ENCODE measurements at regions of chr16 and their contacts with region 1.

Region 1: DNA sequence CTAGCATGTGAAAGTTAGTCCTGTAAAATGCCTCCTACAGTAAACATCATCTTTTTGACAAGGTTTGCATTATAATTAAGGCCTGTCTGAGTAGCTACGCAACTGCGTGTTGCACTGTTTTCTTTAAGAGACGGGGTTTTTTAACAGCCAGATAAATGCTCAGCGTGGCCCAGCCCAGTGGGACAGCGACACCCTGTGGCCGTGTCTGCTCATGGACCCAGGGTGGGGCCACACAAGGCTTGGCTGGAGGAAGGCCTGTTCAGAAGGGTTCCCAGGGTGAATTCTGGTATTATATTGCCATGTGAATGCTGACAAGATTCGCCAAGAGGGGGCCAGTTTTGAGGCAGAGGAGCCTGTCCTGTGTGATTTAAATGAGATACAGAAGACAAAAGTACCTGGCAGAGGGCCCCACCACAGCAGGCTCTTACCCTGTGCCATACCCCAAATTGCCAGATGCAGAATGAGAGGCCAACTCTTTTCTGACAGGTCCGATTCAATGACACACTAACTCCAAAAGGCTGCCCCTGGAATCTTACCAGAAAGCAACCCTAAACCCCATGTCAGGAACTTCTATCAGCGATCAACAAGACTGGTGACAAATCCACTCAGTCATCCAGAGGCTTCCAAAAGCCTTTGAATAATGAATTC is 65.9 kb upstream of the IRX6 start:
- DNase-seq: peak; percentile 57 to 92
- H3K4me3 ChIP-seq: no peak overlapping the region
- H3K27ac ChIP-seq: no peak overlapping the region
- H3K4me1 ChIP-seq: no peaks in the 10 kb centered on the region
- H3K27me3 ChIP-seq: no peaks in the 10 kb centered on the region; a peak in 1 of 7 replicates
- CTCF ChIP-seq: peak; percentile 92 to 98 (median 95)
- EP300 ChIP-seq: no peak
- POLR2A ChIP-seq: no peak
- RAD21 ChIP-seq: peak; percentile 99 to 100

Region 2: GRCh38 chr16:54957403-54958171 is 300.5 kb before region 1 on chr16:
- CTCF ChIA-PET with region 1: interaction called, 14 read pairs
- POLR2A ChIA-PET with region 1: no interaction called
- DNase-seq: peak in 1 of 2 experiments; percentile 69
- H3K4me3 ChIP-seq: no peak overlapping the region
- H3K27ac ChIP-seq: no peak overlapping the region
- H3K4me1 ChIP-seq: no peaks in the 10 kb centered on the region
- H3K27me3 ChIP-seq: no peaks in the 10 kb centered on the region
- CTCF ChIP-seq: peak; percentile 46 to 63 (median 61)
- EP300 ChIP-seq: no peak
- POLR2A ChIP-seq: no peak
- RAD21 ChIP-seq: peak; percentile 66 to 68

Region 3: GRCh38 chr16:55043499-55043898 is 214.6 kb before region 1 on chr16:
- CTCF ChIA-PET with region 1: interaction called, 15 read pairs
- POLR2A ChIA-PET with region 1: no interaction called
- DNase-seq: no peak
- H3K4me3 ChIP-seq: no peak overlapping the region
- H3K27ac ChIP-seq: no peak overlapping the region
- H3K4me1 ChIP-seq: no peaks in the 10 kb centered on the region
- H3K27me3 ChIP-seq: 0 out of 7 replicates have a peak, but pooled peaks cover 0 to 2% (median 0%) of the 10 kb centered on the region in 4 experiments
- CTCF ChIP-seq: peak; percentile 24 to 45 (median 39)
- EP300 ChIP-seq: no peak
- POLR2A ChIP-seq: no peak
- RAD21 ChIP-seq: peak; percentile 14 to 50; a peak in 3 of 4 replicates

Region 4: DNA sequence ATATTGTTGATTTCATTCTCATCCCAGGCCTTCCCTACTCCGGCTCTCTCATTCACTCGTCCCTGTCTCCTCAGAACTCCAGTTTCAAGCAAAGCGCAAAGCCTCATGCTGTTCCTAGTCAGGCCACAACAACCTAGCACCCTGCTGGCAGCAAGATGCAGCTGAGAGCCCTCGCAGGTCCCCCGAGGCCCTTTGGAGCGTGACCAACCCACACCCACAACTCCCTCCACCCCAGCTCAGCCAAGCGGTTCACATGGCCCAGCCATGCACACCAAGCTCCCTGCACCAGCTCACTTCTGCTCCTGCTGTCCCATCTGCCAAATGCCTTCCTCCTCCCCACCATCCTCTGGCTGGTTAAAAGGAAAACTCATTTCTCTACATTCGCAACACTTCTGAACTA is 131.6 kb before region 1 on chr16:
- CTCF ChIA-PET with region 1: interaction called, 30 read pairs
- POLR2A ChIA-PET with region 1: no interaction called
- DNase-seq: no peak
- H3K4me3 ChIP-seq: no peak overlapping the region
- H3K27ac ChIP-seq: no peak overlapping the region
- H3K4me1 ChIP-seq: no peaks in the 10 kb centered on the region
- H3K27me3 ChIP-seq: no peaks in the 10 kb centered on the region
- CTCF ChIP-seq: no peak
- EP300 ChIP-seq: no peak
- POLR2A ChIP-seq: no peak
- RAD21 ChIP-seq: no peak

Region 5: DNA sequence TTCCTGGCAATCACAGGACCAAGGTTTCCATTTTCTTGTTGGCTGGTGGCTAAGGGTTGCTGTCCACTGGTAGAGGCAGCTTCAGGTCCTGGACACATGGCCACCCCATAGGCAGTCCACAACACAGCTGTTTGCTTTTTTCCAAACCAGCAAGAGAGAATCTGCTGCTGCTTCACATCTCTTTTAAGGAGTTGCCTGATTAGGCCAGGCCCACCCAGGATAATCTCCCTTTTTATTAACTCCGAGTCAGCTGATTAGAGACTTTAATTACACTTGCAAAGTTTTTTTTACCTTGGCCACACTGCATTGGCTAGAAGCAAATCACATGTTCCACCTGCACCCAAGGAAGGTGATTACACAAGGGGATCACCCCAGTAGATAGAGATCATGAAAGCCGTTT is 40.7 kb before region 1 on chr16:
- CTCF ChIA-PET with region 1: no interaction called
- POLR2A ChIA-PET with region 1: no interaction called
- DNase-seq: no peak
- H3K4me3 ChIP-seq: no peak overlapping the region
- H3K27ac ChIP-seq: no peak overlapping the region
- H3K4me1 ChIP-seq: no peaks in the 10 kb centered on the region
- H3K27me3 ChIP-seq: no peaks in the 10 kb centered on the region
- CTCF ChIP-seq: no peak
- EP300 ChIP-seq: no peak
- POLR2A ChIP-seq: no peak
- RAD21 ChIP-seq: no peak

Region 6: DNA sequence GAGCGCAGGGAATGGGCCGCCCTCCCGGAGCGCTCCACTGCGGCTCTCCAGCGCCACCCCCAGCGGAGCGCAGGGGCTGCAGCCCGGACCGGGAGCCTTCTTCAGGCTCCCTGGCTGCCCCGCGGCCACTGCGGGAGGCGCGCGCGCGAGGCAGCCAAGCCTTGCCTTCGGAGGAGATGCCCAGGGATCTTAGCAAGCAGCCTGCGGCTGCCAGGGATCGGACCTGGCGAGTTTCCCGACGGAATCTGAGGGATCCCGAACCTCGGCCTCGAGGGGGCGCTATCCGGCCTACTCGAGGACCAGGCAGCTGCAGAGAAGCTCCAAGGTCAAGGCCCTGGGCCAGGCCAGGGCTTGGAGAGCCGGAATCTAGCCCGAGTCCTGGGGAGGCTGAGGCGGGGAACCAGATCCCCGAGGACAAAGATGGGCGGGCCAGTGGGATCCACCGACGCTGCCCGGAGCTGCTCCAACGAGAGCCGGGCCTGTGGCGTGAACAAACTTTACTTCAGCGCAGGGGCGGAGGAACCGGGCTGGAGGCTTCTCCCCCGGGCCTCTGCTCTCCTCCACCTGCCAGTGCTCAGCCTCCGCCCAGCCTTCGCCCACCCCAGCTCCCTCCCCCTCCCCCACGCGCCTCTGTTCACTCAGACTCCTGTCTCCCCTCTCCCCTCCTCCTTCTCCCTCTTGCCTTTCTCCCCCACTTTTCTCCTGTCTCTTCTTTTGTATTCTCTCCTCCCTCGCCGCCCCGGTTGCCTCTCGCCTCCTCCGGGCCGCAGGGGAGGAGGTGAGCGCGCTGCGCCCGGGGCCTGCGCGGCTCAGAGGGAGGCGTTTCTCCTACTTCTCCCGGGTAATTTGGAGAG is 65.8 kb after region 1 on chr16 and contains the start of gene IRX6:
- CTCF ChIA-PET with region 1: interaction called, 13 read pairs
- POLR2A ChIA-PET with region 1: no interaction called
- DNase-seq: peak; percentile 82 to 93
- H3K4me3 ChIP-seq: peak within 1 kb of the TSS; percentile 32 to 81 (median 50)
- H3K27ac ChIP-seq: no peak within 1 kb of the TSS
- H3K4me1 ChIP-seq: peaks cover 0 to 10% (median 2%) of the 10 kb centered on the region in 4 experiments; a peak in 5 of 7 replicates
- H3K27me3 ChIP-seq: peaks cover 48 to 61% (median 59%) of the 10 kb centered on the region in 4 experiments
- CTCF ChIP-seq: peak; percentile 53 to 85 (median 54)
- EP300 ChIP-seq: no peak
- POLR2A ChIP-seq: no peak
- RAD21 ChIP-seq: peak; percentile 57 to 61
- total RNA-seq, gene IRX6: 0.55 and 0.61 TPM in 2 replicates

Measured in H1 (cell line).